AG04450 (cell line): ENCODE measurements at regions of chr6 and their contacts with region 1.

Region 1: GRCh38 chr6:112043032-112044007 is 10.6 kb upstream of the CCN6 start:
- DNase-seq: peak; percentile 84
- H3K4me3 ChIP-seq: peak overlapping the region; percentile 70
- H3K27ac ChIP-seq: peak overlapping the region; percentile 74
- H3K27me3 ChIP-seq: no peaks in the 10 kb centered on the region
- CTCF ChIP-seq: peak; percentile 98

Region 2: GRCh38 chr6:111250791-111251354 is 792.4 kb before region 1 on chr6:
- CTCF ChIA-PET with region 1: interaction called, 10 read pairs
- POLR2A ChIA-PET with region 1: no interaction called
- DNase-seq: no peak
- H3K4me3 ChIP-seq: no peak overlapping the region
- H3K27ac ChIP-seq: no peak overlapping the region
- H3K27me3 ChIP-seq: no peaks in the 10 kb centered on the region
- CTCF ChIP-seq: no peak

Region 3: GRCh38 chr6:111677249-111677990 is 365.9 kb before region 1 on chr6:
- CTCF ChIA-PET with region 1: interaction called, 14 read pairs
- POLR2A ChIA-PET with region 1: no interaction called
- DNase-seq: no peak
- H3K4me3 ChIP-seq: no peak overlapping the region
- H3K27ac ChIP-seq: no peak overlapping the region
- H3K27me3 ChIP-seq: no peaks in the 10 kb centered on the region
- CTCF ChIP-seq: no peak

Region 4: DNA sequence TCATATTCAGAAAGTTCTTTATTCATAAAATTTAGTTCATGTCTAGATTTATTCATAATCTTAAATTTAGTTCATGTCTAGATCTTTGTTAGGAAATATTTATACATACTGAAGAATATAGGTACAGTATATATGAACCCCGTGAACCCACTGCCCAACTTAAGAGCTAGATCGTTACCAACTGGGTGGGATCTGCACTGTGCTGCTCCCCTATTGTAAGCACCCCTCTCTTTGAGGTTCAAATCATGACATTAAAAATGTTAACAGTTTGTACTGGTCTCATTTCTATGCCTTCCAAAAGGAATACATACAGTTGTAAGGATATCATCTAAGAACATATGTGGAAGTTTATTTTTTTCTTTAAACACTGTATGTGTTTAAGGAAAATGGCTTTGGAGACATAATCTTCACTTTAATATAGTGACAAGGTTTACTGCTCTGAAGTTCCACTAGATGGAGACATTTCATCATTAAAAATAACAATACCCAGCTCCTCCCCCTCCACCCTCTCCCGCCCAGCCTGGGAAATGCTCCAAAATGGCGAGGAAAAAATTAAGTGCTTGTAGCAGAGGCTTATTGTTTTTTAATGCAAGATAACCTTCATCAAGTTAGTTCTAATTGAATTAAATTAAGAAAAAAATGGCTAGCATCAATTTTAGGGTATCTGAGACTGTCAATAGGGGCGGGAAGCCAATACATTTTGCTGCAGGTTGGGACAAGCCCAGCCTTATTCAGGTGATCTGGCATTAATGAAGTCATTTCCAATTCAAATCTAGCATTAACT is 333.5 kb before region 1 on chr6:
- CTCF ChIA-PET with region 1: interaction called, 175 read pairs
- POLR2A ChIA-PET with region 1: interaction called, 3 read pairs
- DNase-seq: no peak
- H3K4me3 ChIP-seq: no peak overlapping the region
- H3K27ac ChIP-seq: no peak overlapping the region
- H3K27me3 ChIP-seq: no peaks in the 10 kb centered on the region
- CTCF ChIP-seq: peak; percentile 62

Region 5: GRCh38 chr6:111857674-111858337 is 185.5 kb before region 1 on chr6:
- CTCF ChIA-PET with region 1: no interaction called
- POLR2A ChIA-PET with region 1: no interaction called
- DNase-seq: no peak
- H3K4me3 ChIP-seq: no peak overlapping the region
- H3K27ac ChIP-seq: no peak overlapping the region
- H3K27me3 ChIP-seq: no peaks in the 10 kb centered on the region
- CTCF ChIP-seq: no peak

Region 6: GRCh38 chr6:111880181-111880888 is 163.0 kb before region 1 on chr6:
- CTCF ChIA-PET with region 1: interaction called, 10 read pairs
- POLR2A ChIA-PET with region 1: no interaction called
- DNase-seq: no peak
- H3K4me3 ChIP-seq: no peak overlapping the region
- H3K27ac ChIP-seq: no peak overlapping the region
- H3K27me3 ChIP-seq: peaks cover 9% of the 10 kb centered on the region
- CTCF ChIP-seq: no peak